ENCODE measurements at regions of chr7 and their contacts with region 1.

Region 1: GRCh38 chr7:134724606-134725005 is 54.8 kb upstream of the CALD1 start:
- DNase-seq: peak; percentile 41
- H3K4me3 Mint-ChIP-seq: no peak overlapping the region
- H3K27ac Mint-ChIP-seq: no peak overlapping the region
- H3K4me1 Mint-ChIP-seq: no peaks in the 10 kb centered on the region
- H3K27me3 Mint-ChIP-seq: no peaks in the 10 kb centered on the region

Region 2: GRCh38 chr7:134570934-134571495 is 153.6 kb before region 1 on chr7:
- CTCF ChIA-PET with region 1: no interaction called
- POLR2A ChIA-PET with region 1: no interaction called
- intact Hi-C with region 1: no loop called
- DNase-seq: no peak
- H3K4me3 Mint-ChIP-seq: no peak overlapping the region
- H3K27ac Mint-ChIP-seq: no peak overlapping the region
- H3K4me1 Mint-ChIP-seq: no peaks in the 10 kb centered on the region
- H3K27me3 Mint-ChIP-seq: peaks cover 2% of the 10 kb centered on the region

Region 3: GRCh38 chr7:134710859-134711624 is 13.6 kb before region 1 on chr7:
- CTCF ChIA-PET with region 1: interaction called, 13 read pairs
- POLR2A ChIA-PET with region 1: interaction called, 3 read pairs
- intact Hi-C with region 1: no loop called
- DNase-seq: peak; percentile 78
- H3K4me3 Mint-ChIP-seq: peak overlapping the region; percentile 76
- H3K27ac Mint-ChIP-seq: peak overlapping the region; percentile 97
- H3K4me1 Mint-ChIP-seq: peaks cover 30% of the 10 kb centered on the region
- H3K27me3 Mint-ChIP-seq: no peaks in the 10 kb centered on the region

Region 4: DNA sequence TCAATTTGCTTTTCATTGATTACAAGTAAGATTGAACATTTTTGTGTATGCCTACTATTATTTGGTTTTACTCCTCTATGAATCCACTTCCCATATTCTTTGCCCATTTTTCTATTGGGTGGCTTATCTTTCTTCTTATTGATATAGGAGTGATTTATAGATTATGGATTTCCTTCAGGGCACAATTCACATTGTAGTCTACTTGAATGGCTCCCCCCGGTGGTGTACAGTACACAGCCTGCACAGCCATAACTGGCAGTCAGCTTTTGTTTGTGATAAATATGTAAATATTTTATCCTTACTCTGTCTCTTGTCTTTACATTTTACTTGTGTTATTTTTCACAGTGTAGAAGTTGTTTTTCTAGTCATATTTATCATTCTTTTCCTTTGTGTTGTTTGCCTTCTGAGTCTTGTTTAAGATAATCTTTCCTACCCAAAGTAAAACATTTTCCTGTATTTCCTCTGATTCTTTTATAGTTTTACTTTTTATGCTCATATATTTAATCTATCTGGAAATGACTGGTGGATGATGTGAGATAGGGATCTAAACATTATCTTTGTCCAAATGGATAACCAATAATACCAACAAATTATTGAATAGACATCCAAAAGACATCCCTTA is 30.9 kb after region 1 on chr7:
- CTCF ChIA-PET with region 1: interaction called, 60 read pairs
- POLR2A ChIA-PET with region 1: no interaction called
- intact Hi-C with region 1: loop called (anchors 1 kb)
- DNase-seq: peak; percentile 59
- H3K4me3 Mint-ChIP-seq: no peak overlapping the region
- H3K27ac Mint-ChIP-seq: no peak overlapping the region
- H3K4me1 Mint-ChIP-seq: peaks cover 5% of the 10 kb centered on the region
- H3K27me3 Mint-ChIP-seq: no peaks in the 10 kb centered on the region